ENCODE measurements at regions of chr10 and their contacts with region 1.

Region 1: DNA sequence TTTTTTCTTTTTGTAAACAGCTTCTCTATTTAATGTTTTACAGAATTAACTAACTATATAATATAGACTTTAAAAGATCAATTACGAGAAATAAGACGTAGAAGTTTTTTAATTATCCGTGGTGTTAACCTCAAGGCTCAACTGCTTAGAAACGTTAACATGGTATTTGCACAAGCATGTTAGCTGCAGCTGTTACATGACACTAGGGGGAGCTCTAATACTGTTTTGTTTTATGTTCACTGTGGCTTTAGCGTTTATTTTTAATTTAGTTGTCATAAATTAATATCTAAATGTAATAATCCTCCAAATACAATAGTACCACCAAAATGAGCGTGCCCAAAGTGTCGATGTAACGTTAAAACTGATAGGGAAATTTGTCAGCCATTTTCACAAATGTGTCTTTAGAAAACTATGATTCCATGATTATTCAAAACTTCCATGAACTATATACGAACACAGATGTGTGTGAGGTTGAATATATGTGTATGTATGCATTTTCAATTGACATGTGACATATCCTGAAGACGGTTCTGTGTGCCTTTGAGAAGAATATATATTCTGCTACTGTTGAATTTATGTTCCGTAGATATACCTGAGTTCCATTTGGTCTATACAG is 828.8 kb upstream of the MBL2 start:
- DNase-seq: peak in 1 of 2 experiments; percentile 43
- H3K4me3 ChIP-seq: no peak overlapping the region
- H3K4me3 Mint-ChIP-seq: no peak overlapping the region
- H3K27ac Mint-ChIP-seq: no peak overlapping the region
- H3K4me1 ChIP-seq: peaks cover 32% of the 10 kb centered on the region
- H3K4me1 Mint-ChIP-seq: peaks cover 29% of the 10 kb centered on the region
- H3K27me3 ChIP-seq: no peaks in the 10 kb centered on the region
- H3K27me3 Mint-ChIP-seq: no peaks in the 10 kb centered on the region
- CTCF ChIP-seq: peak; percentile 98 to 99

Region 2: DNA sequence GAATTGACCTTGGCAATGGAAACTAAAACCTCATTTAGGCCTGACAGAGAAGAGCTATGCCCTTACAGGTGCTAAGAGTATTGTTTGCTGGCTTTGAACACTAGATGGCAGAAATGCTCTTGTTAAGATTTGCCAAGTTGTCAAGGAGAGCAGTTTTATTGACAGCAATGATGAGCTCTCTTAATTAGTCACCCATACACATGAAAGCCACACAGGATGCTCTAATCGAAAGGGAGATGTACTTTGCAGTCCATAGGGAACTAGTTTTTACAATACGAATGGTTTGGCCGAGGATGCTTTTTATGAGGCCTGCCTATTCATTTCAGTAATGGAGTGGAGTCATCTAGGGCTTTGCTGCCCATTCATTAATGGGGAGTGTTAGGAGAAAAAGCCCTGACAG is 783.3 kb before region 1 on chr10:
- CTCF ChIA-PET with region 1: interaction called, 5 read pairs
- POLR2A ChIA-PET with region 1: no interaction called
- intact Hi-C with region 1: loop called (anchors 1 kb)
- DNase-seq: peak in 1 of 2 experiments; percentile 76
- H3K4me3 ChIP-seq: no peak overlapping the region
- H3K4me3 Mint-ChIP-seq: no peak overlapping the region
- H3K27ac Mint-ChIP-seq: no peak overlapping the region
- H3K4me1 ChIP-seq: no peaks in the 10 kb centered on the region; the same call in 1 of the 2 replicates
- H3K4me1 Mint-ChIP-seq: no peaks in the 10 kb centered on the region
- H3K27me3 ChIP-seq: no peaks in the 10 kb centered on the region; the same call in 1 of the 2 replicates
- H3K27me3 Mint-ChIP-seq: peaks cover 3% of the 10 kb centered on the region
- CTCF ChIP-seq: peak; percentile 89 to 90

Region 3: GRCh38 chr10:53765311-53765710 is 163.9 kb after region 1 on chr10:
- CTCF ChIA-PET with region 1: no interaction called
- POLR2A ChIA-PET with region 1: no interaction called
- intact Hi-C with region 1: loop called (anchors 5 kb)
- DNase-seq: no peak
- H3K4me3 ChIP-seq: no peak overlapping the region
- H3K4me3 Mint-ChIP-seq: no peak overlapping the region
- H3K27ac Mint-ChIP-seq: no peak overlapping the region
- H3K4me1 ChIP-seq: peaks cover under 1% of the 10 kb centered on the region; the same call in 1 of the 2 replicates
- H3K4me1 Mint-ChIP-seq: no peaks in the 10 kb centered on the region
- H3K27me3 ChIP-seq: no peaks in the 10 kb centered on the region
- H3K27me3 Mint-ChIP-seq: no peaks in the 10 kb centered on the region
- CTCF ChIP-seq: no peak

Region 4: GRCh38 chr10:53846809-53847208 is 245.4 kb after region 1 on chr10:
- CTCF ChIA-PET with region 1: no interaction called
- POLR2A ChIA-PET with region 1: no interaction called
- intact Hi-C with region 1: loop called (anchors 1 kb)
- DNase-seq: no peak
- H3K4me3 ChIP-seq: no peak overlapping the region
- H3K4me3 Mint-ChIP-seq: no peak overlapping the region
- H3K27ac Mint-ChIP-seq: no peak overlapping the region
- H3K4me1 ChIP-seq: no peaks in the 10 kb centered on the region
- H3K4me1 Mint-ChIP-seq: no peaks in the 10 kb centered on the region
- H3K27me3 ChIP-seq: no peaks in the 10 kb centered on the region
- H3K27me3 Mint-ChIP-seq: no peaks in the 10 kb centered on the region
- CTCF ChIP-seq: peak; percentile 35 to 55

Region 5: DNA sequence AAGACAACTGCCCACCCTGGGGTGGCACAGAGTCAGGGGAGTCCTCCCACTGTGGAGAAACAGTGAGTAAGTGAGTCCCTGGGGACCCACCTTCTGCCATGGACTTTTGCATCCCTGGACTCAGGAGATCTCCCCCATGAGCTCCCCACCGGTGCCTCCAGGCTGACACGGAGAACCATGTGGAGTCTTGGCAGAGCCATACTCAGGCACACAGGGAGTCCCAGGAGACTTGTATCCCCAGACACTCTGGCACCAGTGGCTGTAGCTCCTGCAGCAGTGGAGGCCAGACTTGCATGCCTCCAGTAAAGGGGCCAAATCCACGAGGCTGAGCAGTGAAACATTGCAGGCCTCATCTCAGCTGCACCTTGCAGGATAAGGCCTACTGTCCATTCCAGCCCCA is 408.3 kb after region 1 on chr10:
- CTCF ChIA-PET with region 1: no interaction called
- POLR2A ChIA-PET with region 1: no interaction called
- intact Hi-C with region 1: loop called (anchors 10 kb)
- DNase-seq: no peak
- H3K4me3 ChIP-seq: no peak overlapping the region
- H3K4me3 Mint-ChIP-seq: no peak overlapping the region
- H3K27ac Mint-ChIP-seq: no peak overlapping the region
- H3K4me1 ChIP-seq: no peaks in the 10 kb centered on the region
- H3K4me1 Mint-ChIP-seq: no peaks in the 10 kb centered on the region
- H3K27me3 ChIP-seq: no peaks in the 10 kb centered on the region
- H3K27me3 Mint-ChIP-seq: no peaks in the 10 kb centered on the region
- CTCF ChIP-seq: no peak

Region 6: GRCh38 chr10:55065185-55065584 is 1463.8 kb after region 1 on chr10:
- CTCF ChIA-PET with region 1: no interaction called
- POLR2A ChIA-PET with region 1: no interaction called
- intact Hi-C with region 1: loop called (anchors 5 kb)
- DNase-seq: peak in 1 of 2 experiments; percentile 70
- H3K4me3 ChIP-seq: no peak overlapping the region
- H3K4me3 Mint-ChIP-seq: peak overlapping the region; percentile 0
- H3K27ac Mint-ChIP-seq: peak overlapping the region; percentile 38
- H3K4me1 ChIP-seq: peaks cover 27% of the 10 kb centered on the region
- H3K4me1 Mint-ChIP-seq: peaks cover 7% of the 10 kb centered on the region
- H3K27me3 ChIP-seq: no peaks in the 10 kb centered on the region
- H3K27me3 Mint-ChIP-seq: no peaks in the 10 kb centered on the region
- CTCF ChIP-seq: no peak